ENCODE measurements at regions of chr6 and their contacts with region 1.

Region 1: GRCh38 chr6:170529839-170530469 is 23.2 kb downstream of the PSMB1 start:
- DNase-seq: peak; percentile 39
- H3K4me3 Mint-ChIP-seq: no peak overlapping the region
- H3K27ac Mint-ChIP-seq: no peak overlapping the region
- H3K4me1 Mint-ChIP-seq: peaks cover 5% of the 10 kb centered on the region
- H3K27me3 Mint-ChIP-seq: peaks cover 10% of the 10 kb centered on the region

Region 2: DNA sequence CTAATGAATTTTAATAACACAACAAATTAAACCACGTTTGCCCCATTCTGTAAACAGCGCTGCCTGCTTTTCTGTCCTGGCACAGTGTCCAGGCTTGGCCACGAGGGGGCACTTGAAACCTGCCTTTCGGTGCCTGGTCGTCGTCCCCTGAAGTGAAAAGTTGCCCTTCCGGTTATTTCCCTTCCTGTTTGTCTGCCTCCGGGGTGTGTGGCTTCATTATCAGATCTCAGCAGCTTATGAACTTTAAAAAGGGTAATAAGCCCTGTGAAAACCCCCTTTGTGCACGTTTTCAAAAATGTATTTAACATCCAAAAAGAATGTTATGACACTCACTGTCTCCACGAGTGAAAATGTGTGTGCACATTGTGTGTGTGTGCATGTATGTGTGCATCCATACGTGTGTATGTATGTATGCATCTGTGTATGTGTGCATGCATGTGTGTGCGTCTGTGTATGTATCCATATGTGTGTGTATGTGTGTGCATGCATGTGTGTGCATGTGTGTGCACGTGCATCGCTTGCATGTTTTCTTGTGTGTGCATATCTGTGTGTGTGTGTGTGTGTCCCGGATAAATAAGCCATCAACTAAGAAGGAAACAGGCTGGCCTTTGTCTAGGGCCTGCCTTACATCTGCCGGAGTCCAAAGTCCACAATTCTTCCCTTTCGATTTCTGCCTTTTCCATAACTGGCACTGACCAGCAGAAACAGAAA is 1634.7 kb before region 1 on chr6:
- intact Hi-C with region 1: loop called (anchors 10 kb)
- DNase-seq: peak; percentile 70
- H3K4me3 Mint-ChIP-seq: no peak overlapping the region
- H3K27ac Mint-ChIP-seq: no peak overlapping the region
- H3K4me1 Mint-ChIP-seq: peaks cover 16% of the 10 kb centered on the region
- H3K27me3 Mint-ChIP-seq: peaks cover 11% of the 10 kb centered on the region

Region 3: GRCh38 chr6:169831450-169832246 is 698.3 kb before region 1 on chr6:
- intact Hi-C with region 1: loop called (anchors 1 kb)
- DNase-seq: peak; percentile 48
- H3K4me3 Mint-ChIP-seq: no peak overlapping the region
- H3K27ac Mint-ChIP-seq: no peak overlapping the region
- H3K4me1 Mint-ChIP-seq: peaks cover 2% of the 10 kb centered on the region
- H3K27me3 Mint-ChIP-seq: peaks cover 38% of the 10 kb centered on the region

Region 4: GRCh38 chr6:170584181-170584953 is 54.4 kb after region 1 on chr6 and contains the start of gene PDCD2:
- intact Hi-C with region 1: no loop called
- DNase-seq: peak; percentile 89
- H3K4me3 Mint-ChIP-seq: peak within 1 kb of the TSS; percentile 99
- H3K27ac Mint-ChIP-seq: peak within 1 kb of the TSS; percentile 90
- H3K4me1 Mint-ChIP-seq: peaks cover 28% of the 10 kb centered on the region
- H3K27me3 Mint-ChIP-seq: peaks cover 3% of the 10 kb centered on the region
- total RNA-seq, gene PDCD2: 117 and 124 TPM in 2 replicates

Measured in activated T-helper 2 cell treated with anti-CD3 and anti-CD28 coated beads, Interferon-gamma antibody, Interleukin-2, Interleukin-4, amounts not matched to agents 10 μg/mL and 5 μg/mL and 100 μg/mL, durations not matched to agents 14 hours and 24 hours and 36 hours (primary cell).